Head of caudate nucleus (tissue), 42 donors: ENCODE measurements at regions of chr3 and their contacts with region 1.

Region 1: DNA sequence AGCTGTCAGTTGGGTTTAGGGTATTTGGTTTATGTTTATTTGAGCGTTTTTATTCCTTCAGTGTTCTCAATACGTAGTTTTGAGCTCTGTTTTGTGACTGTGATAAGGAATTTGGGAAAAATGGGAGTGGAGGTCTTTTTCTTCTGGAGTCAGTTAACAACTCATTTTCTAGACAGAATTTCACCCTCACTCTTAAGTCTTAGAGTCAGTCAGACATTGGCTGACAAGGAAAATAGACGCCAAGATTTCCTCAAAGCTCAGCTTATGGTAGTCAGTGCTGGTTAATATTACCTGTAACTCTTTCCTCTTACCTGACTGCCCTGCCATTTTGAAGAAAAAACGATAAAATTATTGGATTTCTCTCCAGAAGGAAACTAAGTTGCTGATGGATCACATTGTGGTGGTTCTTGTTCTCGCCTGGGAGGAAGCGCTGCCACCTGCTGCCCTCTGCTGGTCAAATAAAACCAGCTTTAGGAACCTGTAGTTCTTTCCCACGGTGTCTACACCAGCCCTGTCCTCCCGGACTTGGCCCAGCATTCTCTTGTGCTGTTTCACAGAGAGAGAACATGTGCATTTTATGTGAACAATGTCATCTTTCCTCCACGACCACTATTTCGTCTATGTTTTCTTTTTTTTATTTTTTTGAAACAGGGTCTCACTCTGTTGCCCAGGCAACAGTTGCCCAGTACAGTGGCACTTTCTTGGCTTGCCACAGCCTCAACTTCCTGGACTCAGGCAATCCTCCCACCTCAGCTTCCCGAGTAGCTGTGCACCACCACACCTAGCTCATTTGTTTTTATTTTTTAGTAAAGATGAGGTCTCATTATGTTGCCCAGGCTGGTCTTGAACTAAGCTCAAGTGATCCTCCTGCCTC is 41.4 kb upstream of the UMPS start:
- DNase-seq: peak; percentile 20 to 87 (median 68)

Region 2: DNA sequence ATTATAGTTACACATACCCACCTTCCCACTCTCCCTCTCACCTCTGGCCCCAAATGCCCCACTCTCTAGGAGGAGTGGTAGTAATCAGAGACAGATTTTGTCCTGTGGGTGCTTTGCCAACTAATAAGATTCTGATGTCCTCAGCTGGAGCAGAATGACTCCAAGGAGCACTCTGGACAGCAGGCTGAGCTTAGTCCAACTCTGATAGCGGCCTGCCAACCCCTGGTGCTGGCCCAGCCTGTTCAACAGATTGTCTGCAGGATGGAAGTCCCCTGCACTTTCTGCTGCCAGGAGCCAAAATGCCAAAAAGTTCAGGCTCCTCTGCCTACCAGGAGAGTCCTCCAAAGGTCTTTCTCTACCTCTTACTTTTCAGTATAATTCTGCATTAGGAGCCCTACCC is 119.1 kb before region 1 on chr3:
- intact Hi-C with region 1: loop called (anchors 5 kb)
- DNase-seq: no peak